ENCODE measurements at regions of chr18 and their contacts with region 1.

Region 1: GRCh38 chr18:49728542-49728941 is 84.8 kb downstream of the ACAA2 start:
- DNase-seq: peak; percentile 57
- H3K4me3 ChIP-seq: no peak overlapping the region
- H3K27ac ChIP-seq: no peak overlapping the region
- H3K4me1 ChIP-seq: peaks cover 48% of the 10 kb centered on the region
- H3K27me3 ChIP-seq: no peaks in the 10 kb centered on the region
- CTCF ChIP-seq: peak; percentile 87 to 88

Region 2: GRCh38 chr18:49597157-49597931 is 131.2 kb before region 1 on chr18:
- CTCF ChIA-PET with region 1: no interaction called
- dilution Hi-C with region 1: no loop called
- in situ Hi-C with region 1: no loop called
- intact Hi-C with region 1: loop called (anchors 2 kb)
- DNase-seq: peak; percentile 91
- H3K4me3 ChIP-seq: no peak overlapping the region
- H3K27ac ChIP-seq: peak overlapping the region; percentile 41
- H3K4me1 ChIP-seq: peaks cover 15% of the 10 kb centered on the region
- H3K27me3 ChIP-seq: no peaks in the 10 kb centered on the region
- CTCF ChIP-seq: peak; percentile 6 to 29

Region 3: GRCh38 chr18:49639643-49640391 is 88.7 kb before region 1 on chr18:
- CTCF ChIA-PET with region 1: interaction called, 17 read pairs
- dilution Hi-C with region 1: no loop called
- in situ Hi-C with region 1: no loop called
- intact Hi-C with region 1: no loop called
- DNase-seq: no peak
- H3K4me3 ChIP-seq: no peak overlapping the region
- H3K27ac ChIP-seq: no peak overlapping the region
- H3K4me1 ChIP-seq: no peaks in the 10 kb centered on the region
- H3K27me3 ChIP-seq: no peaks in the 10 kb centered on the region
- CTCF ChIP-seq: no peak

Region 4: DNA sequence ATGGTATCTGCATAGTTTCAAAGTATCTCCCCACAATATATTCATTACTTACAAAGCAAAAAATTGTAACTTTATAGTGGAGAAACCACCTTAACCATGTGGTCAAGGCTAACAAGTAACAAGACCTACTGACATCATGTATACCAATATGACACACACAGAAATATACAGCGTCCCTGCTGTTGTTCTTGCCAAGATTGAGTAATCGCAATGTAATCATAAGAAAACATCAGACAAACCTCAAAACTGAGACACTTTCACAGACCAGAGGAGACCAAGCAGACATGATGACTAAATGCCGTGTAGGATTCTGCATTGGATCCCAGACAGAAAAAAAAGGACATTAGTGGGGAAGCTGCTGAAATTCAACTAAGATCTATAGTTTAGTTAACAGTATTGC is 38.2 kb before region 1 on chr18:
- CTCF ChIA-PET with region 1: no interaction called
- dilution Hi-C with region 1: no loop called
- in situ Hi-C with region 1: no loop called
- intact Hi-C with region 1: loop called (anchors 5 kb)
- DNase-seq: peak; percentile 99
- H3K4me3 ChIP-seq: no peak overlapping the region
- H3K27ac ChIP-seq: peak overlapping the region; percentile 72
- H3K4me1 ChIP-seq: peaks cover 24% of the 10 kb centered on the region
- H3K27me3 ChIP-seq: no peaks in the 10 kb centered on the region
- CTCF ChIP-seq: no peak

Measured in mammary epithelial cell (primary cell).